Endothelial cell of umbilical vein (primary cell): ENCODE measurements at regions of chr18 and their contacts with region 1.

Region 1: GRCh38 chr18:54269893-54270844 is 852 bp downstream of the POLI start:
- DNase-seq: peak; percentile 59
- H3K4me3 ChIP-seq: peak overlapping the region; percentile 11 to 61 (median 56)
- H3K27ac ChIP-seq: peak overlapping the region; percentile 70
- H3K4me1 ChIP-seq: peaks cover 6% of the 10 kb centered on the region
- H3K27me3 ChIP-seq: no peaks in the 10 kb centered on the region
- CTCF ChIP-seq: peak; percentile 29 to 37
- POLR2A ChIP-seq: peak; percentile 75

Region 2: GRCh38 chr18:54119524-54120019 is 150.6 kb before region 1 on chr18:
- CTCF ChIA-PET with region 1: interaction called, 11 read pairs
- POLR2A ChIA-PET with region 1: no interaction called
- dilution Hi-C with region 1: no loop called
- intact Hi-C with region 1: no loop called
- DNase-seq: peak; percentile 69
- H3K4me3 ChIP-seq: no peak overlapping the region
- H3K27ac ChIP-seq: no peak overlapping the region
- H3K4me1 ChIP-seq: no peaks in the 10 kb centered on the region
- H3K27me3 ChIP-seq: no peaks in the 10 kb centered on the region
- CTCF ChIP-seq: peak; percentile 59 to 64
- POLR2A ChIP-seq: no peak

Region 3: GRCh38 chr18:54149078-54149697 is 121.0 kb before region 1 on chr18:
- CTCF ChIA-PET with region 1: interaction called, 5 read pairs
- POLR2A ChIA-PET with region 1: no interaction called
- dilution Hi-C with region 1: no loop called
- intact Hi-C with region 1: loop called (anchors 1 kb)
- DNase-seq: peak; percentile 94
- H3K4me3 ChIP-seq: peak overlapping the region in 1 of 3 experiments; percentile 50
- H3K27ac ChIP-seq: peak overlapping the region; percentile 98
- H3K4me1 ChIP-seq: peaks cover 26% of the 10 kb centered on the region
- H3K27me3 ChIP-seq: no peaks in the 10 kb centered on the region
- CTCF ChIP-seq: no peak
- POLR2A ChIP-seq: no peak

Region 4: GRCh38 chr18:54224379-54225014 is 45.7 kb before region 1 on chr18 and contains the start of gene MBD2:
- CTCF ChIA-PET with region 1: interaction called, 59 read pairs
- POLR2A ChIA-PET with region 1: interaction called, 5 read pairs
- dilution Hi-C with region 1: no loop called
- intact Hi-C with region 1: loop called (anchors 1 kb)
- DNase-seq: peak; percentile 98
- H3K4me3 ChIP-seq: peak within 1 kb of the TSS; percentile 63 to 79 (median 73)
- H3K27ac ChIP-seq: peak within 1 kb of the TSS; percentile 82
- H3K4me1 ChIP-seq: peaks cover 23% of the 10 kb centered on the region
- H3K27me3 ChIP-seq: no peaks in the 10 kb centered on the region
- CTCF ChIP-seq: peak in 1 of 2 donors; percentile 16
- POLR2A ChIP-seq: peak; percentile 55
- total RNA-seq, gene MBD2: 105 and 110 TPM in 2 replicates

Region 5: DNA sequence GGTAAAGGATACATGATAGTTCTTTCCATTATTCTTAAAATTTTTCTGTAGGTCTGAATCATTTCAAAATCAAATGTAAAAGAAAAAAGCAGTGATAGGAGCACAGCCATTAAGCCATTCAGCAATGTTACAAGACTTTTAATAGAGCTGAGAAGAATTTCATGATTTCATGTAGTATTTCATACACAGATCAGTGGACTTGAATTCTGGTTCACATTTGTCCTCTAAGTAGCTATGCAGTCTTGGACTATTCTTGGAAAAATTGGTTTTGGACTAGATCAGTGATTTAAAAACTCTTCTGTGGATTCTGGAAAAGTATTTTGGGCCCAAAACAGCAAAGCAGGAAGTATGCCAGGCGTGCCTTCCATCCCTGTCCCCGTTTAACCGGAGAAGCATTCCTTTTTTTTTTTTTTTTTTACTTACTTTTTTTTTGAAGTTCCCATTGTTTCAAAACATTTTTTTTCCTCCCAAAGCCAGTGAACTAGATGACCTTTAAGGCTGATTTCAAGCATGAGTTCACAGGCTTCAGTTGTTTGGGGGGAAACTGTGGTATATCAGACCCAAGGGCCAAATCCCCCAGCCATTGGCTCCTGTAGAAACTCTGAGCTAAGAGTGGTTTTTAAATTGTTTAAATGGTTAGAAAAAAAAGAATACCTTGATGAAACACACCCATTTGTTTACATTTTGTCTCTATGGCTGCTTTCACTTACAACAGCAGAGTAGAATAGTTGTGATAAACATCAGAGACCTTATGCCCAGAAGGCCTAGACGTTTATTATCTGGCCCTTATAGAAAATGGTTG is 18.4 kb before region 1 on chr18:
- CTCF ChIA-PET with region 1: interaction called, 5 read pairs
- POLR2A ChIA-PET with region 1: no interaction called
- dilution Hi-C with region 1: no loop called
- intact Hi-C with region 1: loop called (anchors 2 kb)
- DNase-seq: peak; percentile 46
- H3K4me3 ChIP-seq: no peak overlapping the region
- H3K27ac ChIP-seq: peak overlapping the region; percentile 41
- H3K4me1 ChIP-seq: peaks cover 20% of the 10 kb centered on the region
- H3K27me3 ChIP-seq: no peaks in the 10 kb centered on the region
- CTCF ChIP-seq: no peak
- POLR2A ChIP-seq: no peak

Region 6: DNA sequence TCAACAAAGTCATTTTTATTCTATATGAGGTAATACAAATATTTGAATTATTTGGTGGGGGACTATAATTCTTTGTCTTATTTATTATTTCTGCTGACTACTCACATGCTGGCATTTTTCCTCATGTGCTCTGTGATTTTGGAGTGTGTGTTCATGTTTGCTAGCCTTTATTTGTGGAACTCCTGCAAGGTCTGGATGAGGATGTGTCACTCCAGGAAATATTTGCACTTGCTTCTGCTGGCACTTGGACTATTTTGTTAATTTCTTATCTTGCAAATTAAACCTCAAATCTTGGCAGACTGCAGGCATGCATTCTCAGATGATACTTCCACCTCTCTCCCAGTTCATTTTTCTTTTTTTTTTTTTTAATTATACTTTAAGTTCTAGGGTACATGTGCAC is 33.2 kb after region 1 on chr18:
- CTCF ChIA-PET with region 1: no interaction called
- POLR2A ChIA-PET with region 1: no interaction called
- dilution Hi-C with region 1: no loop called
- intact Hi-C with region 1: no loop called
- DNase-seq: no peak
- H3K4me3 ChIP-seq: no peak overlapping the region
- H3K27ac ChIP-seq: no peak overlapping the region
- H3K4me1 ChIP-seq: no peaks in the 10 kb centered on the region
- H3K27me3 ChIP-seq: no peaks in the 10 kb centered on the region
- CTCF ChIP-seq: no peak
- POLR2A ChIP-seq: no peak

Region 7: GRCh38 chr18:54357660-54358494 is 87.7 kb after region 1 on chr18 and contains the starts of genes C18orf54 and STARD6:
- CTCF ChIA-PET with region 1: interaction called, 5 read pairs
- POLR2A ChIA-PET with region 1: no interaction called
- dilution Hi-C with region 1: no loop called
- intact Hi-C with region 1: loop called (anchors 5 kb)
- DNase-seq: peak; percentile 92
- H3K4me3 ChIP-seq: peak within 1 kb of the TSS; percentile 64 to 98 (median 79)
- H3K27ac ChIP-seq: peak within 1 kb of the TSS; percentile 51
- H3K4me1 ChIP-seq: peaks cover 11% of the 10 kb centered on the region
- H3K27me3 ChIP-seq: no peaks in the 10 kb centered on the region
- CTCF ChIP-seq: peak; percentile 22 to 23
- POLR2A ChIP-seq: peak; percentile 86
- total RNA-seq, gene C18orf54: 20.8 and 21.4 TPM in 2 replicates
- total RNA-seq, gene STARD6: not detected in 2 replicates

Region 8: DNA sequence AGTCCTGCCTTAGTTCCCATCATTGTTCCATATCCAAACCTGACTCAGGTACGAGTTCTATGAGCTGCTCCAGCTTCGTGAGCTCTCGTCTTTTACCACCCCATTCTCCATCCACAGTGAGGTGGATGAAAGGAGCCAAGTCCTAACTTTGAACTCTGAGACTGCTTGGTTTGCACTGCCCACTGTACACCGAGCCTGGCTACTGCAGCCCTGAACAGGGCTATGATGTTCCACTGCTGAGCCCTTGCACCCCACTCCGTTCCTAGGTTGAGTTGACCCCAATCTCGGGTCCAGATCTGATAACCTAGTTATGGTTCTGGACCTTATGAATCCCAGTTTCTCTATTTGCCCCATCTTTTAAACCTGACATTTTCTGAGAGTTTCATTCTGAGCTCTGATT is 315.6 kb after region 1 on chr18:
- CTCF ChIA-PET with region 1: no interaction called
- POLR2A ChIA-PET with region 1: no interaction called
- dilution Hi-C with region 1: no loop called
- intact Hi-C with region 1: no loop called
- DNase-seq: no peak
- H3K4me3 ChIP-seq: no peak overlapping the region
- H3K27ac ChIP-seq: no peak overlapping the region
- H3K4me1 ChIP-seq: no peaks in the 10 kb centered on the region
- H3K27me3 ChIP-seq: peaks cover 0 to 2% of the 10 kb centered on the region in 2 experiments
- CTCF ChIP-seq: no peak
- POLR2A ChIP-seq: no peak

Region 9: DNA sequence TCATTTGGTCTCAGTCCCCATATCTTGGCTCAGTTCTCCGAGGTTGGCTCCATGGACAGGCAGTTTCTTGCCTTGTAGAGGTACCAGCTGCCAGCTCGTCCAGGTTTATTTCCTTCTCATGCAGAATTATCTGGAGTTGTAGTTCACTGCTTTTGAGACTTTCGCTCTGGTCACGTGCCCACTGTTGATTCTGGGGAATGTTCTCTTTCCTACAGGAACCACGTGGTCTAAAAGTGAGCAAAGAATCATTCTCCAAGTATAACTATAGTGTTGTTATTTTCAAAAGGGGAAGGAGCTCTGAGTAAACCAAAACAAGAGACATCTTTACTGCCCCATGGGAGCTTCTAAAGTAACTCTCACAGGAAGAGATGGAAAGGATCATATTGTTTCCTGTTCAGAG is 517.0 kb after region 1 on chr18:
- CTCF ChIA-PET with region 1: no interaction called
- POLR2A ChIA-PET with region 1: no interaction called
- dilution Hi-C with region 1: no loop called
- intact Hi-C with region 1: no loop called
- DNase-seq: no peak
- H3K4me3 ChIP-seq: no peak overlapping the region
- H3K27ac ChIP-seq: no peak overlapping the region
- H3K4me1 ChIP-seq: no peaks in the 10 kb centered on the region
- H3K27me3 ChIP-seq: no peaks in the 10 kb centered on the region
- CTCF ChIP-seq: no peak
- POLR2A ChIP-seq: no peak